Vagina (tissue), 2 donors: ENCODE measurements at regions of chr7 and their contacts with region 1.

Region 1: DNA sequence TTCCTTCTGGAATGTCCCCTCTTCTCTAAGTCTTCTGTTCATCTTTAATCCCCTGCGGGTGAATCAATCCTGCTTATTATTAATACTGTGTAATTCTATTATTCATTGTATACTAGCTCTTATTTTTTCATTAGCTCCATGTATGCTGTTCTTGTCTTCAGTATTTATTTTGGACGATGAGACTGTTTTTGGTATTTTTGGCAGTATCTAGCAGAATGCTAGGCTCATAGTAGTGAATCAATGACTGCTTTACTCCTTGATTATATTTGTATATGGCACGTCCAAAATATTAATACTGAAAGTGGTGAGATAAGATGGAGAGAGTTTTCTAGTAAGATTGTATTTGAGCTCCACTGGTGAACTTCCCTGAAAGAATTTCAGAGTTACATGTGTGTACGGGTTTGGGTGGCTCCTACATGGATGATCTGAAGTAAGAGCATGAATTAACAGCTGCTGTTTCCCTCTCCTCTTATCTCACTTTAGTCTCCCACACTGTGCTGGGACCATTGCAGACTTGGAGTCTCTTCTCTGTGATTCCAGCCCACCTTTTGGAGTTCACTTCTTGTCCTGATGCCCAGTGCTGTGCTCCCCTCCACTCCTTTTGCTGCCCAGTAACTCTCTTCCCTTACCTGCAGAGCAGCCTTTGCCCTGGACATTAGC is 226.0 kb downstream of the CDK14 start:
- DNase-seq: no peak
- H3K4me3 ChIP-seq: no peak overlapping the region
- H3K27ac ChIP-seq: no peak overlapping the region
- H3K4me1 ChIP-seq: peaks cover 11% of the 10 kb centered on the region
- H3K27me3 ChIP-seq: no peaks in the 10 kb centered on the region
- CTCF ChIP-seq: no peak
- POLR2A ChIP-seq: no peak

Region 2: DNA sequence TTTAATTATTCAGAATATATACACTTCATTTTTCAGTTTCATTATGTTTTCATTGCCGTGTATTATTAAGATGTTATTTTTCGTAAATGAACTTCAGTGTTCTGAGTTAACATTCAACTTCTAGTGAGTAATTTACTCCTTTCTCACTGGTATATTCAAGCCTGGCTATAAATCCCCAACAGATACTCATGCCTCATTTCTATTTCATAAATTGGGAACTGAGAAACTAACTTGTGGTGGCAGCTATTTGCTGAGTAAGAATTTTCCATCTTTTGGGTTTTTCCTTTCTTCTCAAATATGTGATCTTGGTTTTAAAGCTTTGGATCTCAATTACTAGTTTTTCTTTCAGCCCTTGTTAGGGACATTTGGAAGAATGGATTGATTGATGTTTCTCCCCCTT is 55.1 kb after region 1 on chr7:
- intact Hi-C with region 1: no loop called
- DNase-seq: no peak
- H3K4me3 ChIP-seq: no peak overlapping the region
- H3K27ac ChIP-seq: no peak overlapping the region
- H3K4me1 ChIP-seq: no peaks in the 10 kb centered on the region
- H3K27me3 ChIP-seq: no peaks in the 10 kb centered on the region
- CTCF ChIP-seq: no peak
- POLR2A ChIP-seq: no peak

Region 3: GRCh38 chr7:90982228-90982627 is 160.1 kb after region 1 on chr7:
- intact Hi-C with region 1: loop called (anchors 2 kb)
- DNase-seq: no peak
- H3K4me3 ChIP-seq: no peak overlapping the region
- H3K27ac ChIP-seq: no peak overlapping the region
- H3K4me1 ChIP-seq: no peaks in the 10 kb centered on the region
- H3K27me3 ChIP-seq: no peaks in the 10 kb centered on the region
- CTCF ChIP-seq: no peak
- POLR2A ChIP-seq: no peak